Naive thymus-derived CD4-positive, alpha-beta T cell (primary cell): ENCODE measurements at regions of chr15 and their contacts with region 1.

Region 1: DNA sequence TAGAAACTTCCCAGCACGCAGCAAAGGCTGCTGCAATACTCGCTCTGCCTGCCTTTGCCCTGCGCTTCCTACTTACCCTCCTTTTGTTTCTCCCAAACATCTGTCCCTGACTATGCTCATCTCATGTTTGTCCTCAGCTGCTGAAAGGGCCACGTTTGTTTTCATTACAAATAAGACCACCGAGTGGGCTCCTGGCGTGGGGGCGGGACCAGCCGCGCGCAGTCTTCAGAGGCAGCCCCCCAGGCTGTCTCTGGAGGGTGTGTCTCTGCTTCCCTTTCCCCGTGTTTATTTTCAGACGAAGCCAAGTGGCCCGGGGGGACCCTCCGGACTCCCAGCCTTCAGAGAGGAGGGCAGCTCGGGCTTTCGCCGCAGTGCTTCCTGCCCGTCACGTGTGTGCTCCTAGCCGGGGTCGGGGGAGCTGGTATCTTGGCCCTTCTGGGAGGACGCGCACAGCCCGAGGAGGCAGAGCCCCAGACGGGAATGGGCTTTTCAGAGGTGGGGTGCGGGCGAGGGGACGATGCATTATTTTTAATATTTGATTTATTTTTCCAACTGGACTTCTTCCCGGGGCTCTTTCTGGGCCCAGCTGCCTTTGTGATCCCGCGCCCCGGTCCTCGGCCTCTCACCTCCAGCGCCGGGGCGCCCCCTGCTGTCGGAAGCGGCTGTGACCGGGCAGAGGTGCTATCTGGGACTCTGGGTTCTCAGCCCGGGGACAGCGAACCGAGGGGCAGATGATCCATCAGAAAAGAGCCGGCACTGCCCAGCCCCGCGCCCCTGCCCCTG is 70.0 kb upstream of the CGNL1 start:
- DNase-seq: peak; percentile 51 to 92 (median 80)
- ATAC-seq: peak; percentile 85
- H3K4me3 ChIP-seq: peak overlapping the region; percentile 52
- H3K4me3 Mint-ChIP-seq: peak overlapping the region; percentile 15 to 71 (median 60)
- H3K27ac ChIP-seq: no peak overlapping the region
- H3K27ac Mint-ChIP-seq: peak overlapping the region in 1 of 9 donors; percentile 78
- H3K4me1 ChIP-seq: peaks cover 4 to 5% of the 10 kb centered on the region in 2 donors
- H3K4me1 Mint-ChIP-seq: peaks cover 0 to 9% (median 5%) of the 10 kb centered on the region in 7 donors
- H3K27me3 ChIP-seq: no peaks in the 10 kb centered on the region
- H3K27me3 Mint-ChIP-seq: peaks cover 0 to 14% (median 3%) of the 10 kb centered on the region in 5 donors

Region 2: DNA sequence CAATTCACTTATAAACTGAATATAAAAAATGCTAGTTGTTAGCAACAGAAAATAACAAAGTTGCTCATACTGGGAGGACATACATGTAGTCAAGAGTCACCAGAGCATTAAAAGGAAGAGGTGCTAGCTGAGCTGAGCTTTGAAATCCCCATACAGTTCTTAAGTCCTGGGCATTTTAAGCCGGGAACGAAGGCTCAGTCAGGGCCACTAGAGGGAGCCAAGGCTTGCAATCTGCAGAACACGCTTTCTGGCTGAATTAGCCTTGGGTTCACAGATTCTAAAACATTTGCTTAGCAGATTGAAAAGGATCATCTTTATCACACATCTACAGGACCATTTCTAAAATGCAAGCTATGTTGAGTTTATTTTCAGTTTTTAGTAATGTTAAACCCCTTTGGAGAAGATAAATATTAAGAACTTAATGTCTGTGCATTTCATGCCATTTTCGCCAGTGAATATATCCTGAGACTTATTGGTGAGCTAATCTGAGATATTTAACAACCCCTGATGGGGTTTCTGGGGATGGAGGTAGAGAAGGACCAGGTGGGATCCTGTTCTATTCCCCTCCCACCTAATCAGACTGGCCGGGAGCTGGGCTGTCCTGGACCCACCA is 815.1 kb before region 1 on chr15:
- CTCF ChIA-PET with region 1: interaction called, 12 read pairs
- POLR2A ChIA-PET with region 1: no interaction called
- intact Hi-C with region 1: loop called (anchors 1 kb)
- DNase-seq: peak in 7 of 9 donors; percentile 24 to 49 (median 40)
- ATAC-seq: peak; percentile 74
- H3K4me3 ChIP-seq: no peak overlapping the region
- H3K4me3 Mint-ChIP-seq: no peak overlapping the region
- H3K27ac ChIP-seq: no peak overlapping the region
- H3K27ac Mint-ChIP-seq: no peak overlapping the region
- H3K4me1 ChIP-seq: no peaks in the 10 kb centered on the region
- H3K4me1 Mint-ChIP-seq: peaks cover 0 to 8% (median 0%) of the 10 kb centered on the region in 7 donors
- H3K27me3 ChIP-seq: no peaks in the 10 kb centered on the region
- H3K27me3 Mint-ChIP-seq: peaks cover 0 to 15% (median 6%) of the 10 kb centered on the region in 5 donors

Region 3: GRCh38 chr15:56631765-56632164 is 674.6 kb before region 1 on chr15:
- CTCF ChIA-PET with region 1: no interaction called
- POLR2A ChIA-PET with region 1: no interaction called
- intact Hi-C with region 1: loop called in 1 of 2 experiments (anchors 10 kb)
- DNase-seq: no peak
- ATAC-seq: no peak
- H3K4me3 ChIP-seq: no peak overlapping the region
- H3K4me3 Mint-ChIP-seq: no peak overlapping the region
- H3K27ac ChIP-seq: no peak overlapping the region
- H3K27ac Mint-ChIP-seq: peak overlapping the region in 4 of 9 donors; percentile 37 to 71 (median 46)
- H3K4me1 ChIP-seq: peaks cover 0 to 3% of the 10 kb centered on the region in 2 donors
- H3K4me1 Mint-ChIP-seq: peaks cover 0 to 12% (median 0%) of the 10 kb centered on the region in 7 donors
- H3K27me3 ChIP-seq: no peaks in the 10 kb centered on the region
- H3K27me3 Mint-ChIP-seq: no peaks in the 10 kb centered on the region

Region 4: GRCh38 chr15:56886932-56887781 is 419.2 kb before region 1 on chr15:
- CTCF ChIA-PET with region 1: interaction called, 3 read pairs
- POLR2A ChIA-PET with region 1: no interaction called
- intact Hi-C with region 1: loop called in 1 of 2 experiments (anchors 2 kb)
- DNase-seq: peak; percentile 74 to 86 (median 80)
- ATAC-seq: peak; percentile 91
- H3K4me3 ChIP-seq: peak overlapping the region; percentile 80
- H3K4me3 Mint-ChIP-seq: peak overlapping the region; percentile 82 to 96 (median 88)
- H3K27ac ChIP-seq: peak overlapping the region; percentile 86
- H3K27ac Mint-ChIP-seq: peak overlapping the region; percentile 80 to 98 (median 93)
- H3K4me1 ChIP-seq: peaks cover 9 to 12% of the 10 kb centered on the region in 2 donors
- H3K4me1 Mint-ChIP-seq: peaks cover 17 to 35% (median 26%) of the 10 kb centered on the region in 7 donors
- H3K27me3 ChIP-seq: no peaks in the 10 kb centered on the region
- H3K27me3 Mint-ChIP-seq: peaks cover 0 to 8% (median 0%) of the 10 kb centered on the region in 5 donors

Region 5: GRCh38 chr15:57146506-57147201 is 159.7 kb before region 1 on chr15:
- CTCF ChIA-PET with region 1: interaction called, 17 read pairs
- POLR2A ChIA-PET with region 1: no interaction called
- intact Hi-C with region 1: loop called (anchors 1 kb)
- DNase-seq: peak in 5 of 9 donors; percentile 14 to 35 (median 16)
- ATAC-seq: no peak
- H3K4me3 ChIP-seq: no peak overlapping the region
- H3K4me3 Mint-ChIP-seq: no peak overlapping the region
- H3K27ac ChIP-seq: no peak overlapping the region
- H3K27ac Mint-ChIP-seq: peak overlapping the region in 1 of 9 donors; percentile 14
- H3K4me1 ChIP-seq: no peaks in the 10 kb centered on the region
- H3K4me1 Mint-ChIP-seq: peaks cover 6 to 18% (median 12%) of the 10 kb centered on the region in 7 donors
- H3K27me3 ChIP-seq: no peaks in the 10 kb centered on the region
- H3K27me3 Mint-ChIP-seq: no peaks in the 10 kb centered on the region